K562 (cell line): ENCODE measurements at regions of chr22 and their contacts with region 1.

Region 1: GRCh38 chr22:17742527-17742902 is 31.8 kb downstream of the BID start:
- DNase-seq: peak; percentile 89 to 94 (median 92)
- ATAC-seq: peak; percentile 98
- H3K4me3 ChIP-seq: no peak overlapping the region
- H3K27ac ChIP-seq: no peak overlapping the region
- H3K4me1 ChIP-seq: peaks cover 0 to 18% of the 10 kb centered on the region in 2 experiments; a peak in 2 of 5 replicates
- H3K27me3 ChIP-seq: no peaks in the 10 kb centered on the region
- CTCF ChIP-seq: peak; percentile 89 to 95 (median 93)
- EP300 ChIP-seq: no peak
- POLR2A ChIP-seq: no peak
- RAD21 ChIP-seq: peak; percentile 74 to 93

Region 2: DNA sequence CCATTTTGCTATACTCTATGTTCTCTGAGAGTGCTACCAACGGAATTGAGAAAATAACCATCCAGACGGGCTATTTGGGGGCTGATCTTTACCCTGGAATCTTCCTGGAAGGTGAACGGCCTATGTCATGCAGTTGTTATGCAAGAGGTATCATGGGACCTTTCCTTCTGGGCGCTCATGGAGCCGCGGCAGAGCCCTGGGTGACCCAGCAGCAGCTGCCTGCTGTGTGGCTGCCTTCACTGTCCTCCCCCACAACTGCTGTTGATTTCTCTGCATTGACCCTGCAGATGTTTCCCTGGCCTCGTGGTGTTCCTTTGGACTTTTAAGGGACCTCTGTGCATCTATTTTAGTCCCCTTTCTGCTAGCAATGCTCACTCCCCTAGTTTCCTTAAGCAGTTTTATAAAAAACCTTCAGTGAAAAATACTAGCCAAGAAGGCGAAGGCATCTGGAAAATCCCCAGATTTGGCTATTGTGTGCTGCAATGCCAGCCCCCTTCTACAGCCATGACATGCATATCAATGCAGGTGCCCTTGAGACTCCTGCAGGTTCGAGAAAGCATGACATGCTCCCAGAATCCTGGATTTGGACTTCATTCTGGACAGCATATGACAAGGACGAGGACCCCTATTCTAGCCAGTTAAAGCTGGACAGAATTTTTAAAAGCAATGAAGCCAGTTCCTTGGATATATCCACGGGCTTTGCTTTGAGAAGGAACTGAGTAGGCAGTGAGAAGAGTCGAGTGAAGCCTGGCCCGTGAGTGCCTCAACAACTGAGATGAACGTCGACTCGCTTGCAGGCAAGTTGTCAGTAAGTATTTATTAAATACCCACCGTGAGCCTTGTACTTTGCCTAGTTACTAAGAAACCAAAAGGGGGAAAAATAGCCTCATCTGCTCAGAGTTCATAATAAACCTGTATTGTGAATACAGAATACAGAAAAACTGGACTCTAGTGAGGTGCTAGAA is 179.3 kb before region 1 on chr22 and contains the start of gene SLC25A18:
- CTCF ChIA-PET with region 1: no interaction called
- POLR2A ChIA-PET with region 1: no interaction called
- in situ Hi-C with region 1: loop called (anchors 10 kb)
- intact Hi-C with region 1: loop called (anchors 2 kb)
- DNase-seq: peak; percentile 37 to 47 (median 44)
- ATAC-seq: peak; percentile 56
- H3K4me3 ChIP-seq: no peak within 1 kb of the TSS
- H3K27ac ChIP-seq: no peak within 1 kb of the TSS
- H3K4me1 ChIP-seq: 0 out of 5 replicates have a peak, but pooled peaks cover 0 to 4% of the 10 kb centered on the region in 2 experiments
- H3K27me3 ChIP-seq: peaks cover 38 to 44% of the 10 kb centered on the region in 2 experiments
- CTCF ChIP-seq: peak; percentile 11 to 32 (median 25); a peak in 2 of 6 replicates
- EP300 ChIP-seq: no peak
- POLR2A ChIP-seq: no peak
- RAD21 ChIP-seq: no peak
- polyA plus RNA-seq, gene SLC25A18: 0.04 TPM in 1 of 2 experiments, not detected in the other

Region 3: DNA sequence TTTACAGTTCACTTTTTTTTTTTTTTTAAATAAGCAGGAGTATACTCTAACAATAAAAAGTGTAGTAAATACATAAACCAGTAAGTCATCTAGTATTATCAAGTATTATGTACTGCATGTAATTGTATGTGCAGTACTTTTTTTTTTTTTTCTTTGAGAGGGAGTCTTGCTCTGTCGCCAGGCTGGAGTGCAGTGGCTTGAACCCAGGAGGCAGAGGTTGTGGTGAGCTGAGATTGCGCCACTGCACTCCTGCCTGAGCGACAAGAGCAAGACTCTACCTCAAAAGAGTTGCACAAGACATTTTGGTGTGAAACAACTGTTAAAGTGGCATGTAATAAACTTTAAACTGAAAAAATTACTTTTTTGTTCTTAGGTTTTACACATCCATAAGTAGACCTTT is 87.2 kb before region 1 on chr22:
- CTCF ChIA-PET with region 1: no interaction called
- POLR2A ChIA-PET with region 1: no interaction called
- in situ Hi-C with region 1: no loop called
- intact Hi-C with region 1: no loop called
- DNase-seq: no peak
- ATAC-seq: no peak
- H3K4me3 ChIP-seq: no peak overlapping the region
- H3K27ac ChIP-seq: no peak overlapping the region
- H3K4me1 ChIP-seq: no peaks in the 10 kb centered on the region
- H3K27me3 ChIP-seq: no peaks in the 10 kb centered on the region
- CTCF ChIP-seq: no peak
- EP300 ChIP-seq: no peak
- POLR2A ChIP-seq: no peak
- RAD21 ChIP-seq: no peak

Region 4: GRCh38 chr22:17785185-17786184 is 43.0 kb after region 1 on chr22:
- CTCF ChIA-PET with region 1: interaction called, 23 read pairs
- POLR2A ChIA-PET with region 1: interaction called, 5 read pairs
- in situ Hi-C with region 1: no loop called
- intact Hi-C with region 1: loop called (anchors 1 kb)
- DNase-seq: peak; percentile 85 to 91 (median 87)
- ATAC-seq: peak; percentile 82
- H3K4me3 ChIP-seq: no peak overlapping the region
- H3K27ac ChIP-seq: peak overlapping the region; percentile 77; the same call in 1 of the 3 replicates
- H3K4me1 ChIP-seq: peaks cover 33 to 68% of the 10 kb centered on the region in 2 experiments; a peak in 4 of 5 replicates
- H3K27me3 ChIP-seq: no peaks in the 10 kb centered on the region; a peak in 1 of 5 replicates
- CTCF ChIP-seq: peak; percentile 88 to 97 (median 92)
- EP300 ChIP-seq: no peak
- POLR2A ChIP-seq: no peak
- RAD21 ChIP-seq: peak; percentile 44 to 84

Region 5: DNA sequence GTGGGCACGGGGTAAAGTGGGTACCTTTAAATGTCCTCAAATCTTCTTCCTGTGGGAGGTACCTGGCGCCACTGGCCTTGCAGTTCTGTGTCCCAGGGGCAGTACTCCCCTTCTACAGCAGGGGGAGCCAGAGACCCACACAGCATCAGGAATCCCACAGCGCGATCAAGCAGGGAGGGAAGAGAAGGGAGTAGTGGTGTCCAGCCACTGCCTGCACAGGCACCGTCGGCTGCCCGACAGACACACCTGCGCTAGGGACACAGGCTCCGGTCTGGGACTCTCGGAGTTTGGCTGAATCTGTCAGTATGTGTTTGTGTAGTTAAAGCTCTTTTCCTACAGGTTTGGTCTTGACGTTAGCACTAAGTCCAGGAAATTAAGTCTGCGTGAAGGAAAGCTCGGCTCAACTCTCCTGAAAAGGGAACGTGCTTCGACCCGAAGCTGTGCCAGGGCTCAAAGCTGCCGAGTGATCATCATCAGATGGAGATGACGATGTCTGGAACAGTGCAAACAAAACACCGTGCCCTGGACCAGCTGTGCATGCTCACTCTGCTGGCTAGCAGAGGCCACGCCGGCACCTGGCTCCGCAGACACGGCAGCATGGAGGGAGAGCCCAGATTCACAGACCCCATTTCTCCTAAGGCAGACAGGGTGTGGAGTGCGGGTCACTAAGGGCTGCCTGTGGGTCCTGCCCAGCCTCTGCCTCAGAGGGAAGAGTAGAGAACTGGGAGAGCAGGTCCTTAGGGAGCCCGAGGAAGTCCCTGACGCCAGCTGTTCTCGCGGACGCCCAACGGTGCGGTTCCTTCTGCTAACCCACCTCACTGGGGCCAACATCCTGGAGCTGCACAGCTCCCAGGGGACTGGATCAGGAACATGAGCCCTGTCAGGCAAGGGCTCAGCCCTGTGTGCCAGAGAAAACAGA is 87.8 kb after region 1 on chr22:
- CTCF ChIA-PET with region 1: no interaction called
- POLR2A ChIA-PET with region 1: interaction called, 3 read pairs
- in situ Hi-C with region 1: no loop called
- intact Hi-C with region 1: loop called (anchors 10 kb)
- DNase-seq: peak; percentile 89 to 91 (median 90)
- ATAC-seq: peak; percentile 97
- H3K4me3 ChIP-seq: no peak overlapping the region
- H3K27ac ChIP-seq: no peak overlapping the region
- H3K4me1 ChIP-seq: peaks cover 0 to 8% of the 10 kb centered on the region in 2 experiments; a peak in 1 of 5 replicates
- H3K27me3 ChIP-seq: no peaks in the 10 kb centered on the region
- CTCF ChIP-seq: peak; percentile 97 to 99 (median 98)
- EP300 ChIP-seq: no peak
- POLR2A ChIP-seq: no peak
- RAD21 ChIP-seq: peak; percentile 95 to 99

Region 6: DNA sequence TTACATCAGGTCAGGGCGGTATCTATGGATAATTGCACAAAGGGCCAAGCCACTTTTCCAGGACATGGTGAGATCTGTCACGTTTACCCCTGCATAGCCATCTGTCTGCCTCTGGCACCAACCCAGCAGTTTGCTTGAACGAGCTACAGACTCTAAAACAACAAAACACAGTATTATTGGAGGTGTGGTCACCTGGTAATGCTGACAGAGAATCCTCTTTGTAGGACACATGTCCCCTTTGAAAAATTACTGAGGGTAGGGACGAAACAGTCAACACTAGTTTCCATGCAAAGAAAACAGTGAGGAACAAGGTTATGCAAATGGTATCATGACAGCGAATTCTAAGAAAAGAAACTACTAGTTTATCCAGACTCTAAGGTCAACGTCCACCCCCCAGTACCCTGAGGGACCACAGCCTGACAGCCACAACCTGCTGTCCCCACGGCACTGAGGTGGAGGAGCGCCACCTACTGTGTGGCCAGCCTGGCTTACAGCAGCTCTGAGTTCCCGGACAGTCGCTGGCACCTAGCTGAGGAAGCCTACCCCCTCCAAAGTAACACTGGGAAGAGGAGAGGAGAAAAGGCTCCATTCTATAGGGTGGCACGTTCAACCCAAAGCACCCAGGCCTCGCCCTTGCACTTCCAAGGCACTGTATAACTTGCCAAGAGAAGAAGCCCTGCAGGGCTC is 149.1 kb after region 1 on chr22:
- CTCF ChIA-PET with region 1: no interaction called
- POLR2A ChIA-PET with region 1: no interaction called
- in situ Hi-C with region 1: no loop called
- intact Hi-C with region 1: loop called (anchors 5 kb)
- DNase-seq: peak; percentile 51 to 59 (median 55)
- ATAC-seq: peak; percentile 84
- H3K4me3 ChIP-seq: no peak overlapping the region
- H3K27ac ChIP-seq: no peak overlapping the region
- H3K4me1 ChIP-seq: no peaks in the 10 kb centered on the region
- H3K27me3 ChIP-seq: no peaks in the 10 kb centered on the region
- CTCF ChIP-seq: peak; percentile 67 to 78 (median 68)
- EP300 ChIP-seq: no peak
- POLR2A ChIP-seq: no peak
- RAD21 ChIP-seq: peak; percentile 26 to 73; a peak in 3 of 4 replicates

Region 7: GRCh38 chr22:17931400-17931825 is 188.9 kb after region 1 on chr22:
- CTCF ChIA-PET with region 1: no interaction called
- POLR2A ChIA-PET with region 1: no interaction called
- in situ Hi-C with region 1: no loop called
- intact Hi-C with region 1: no loop called
- DNase-seq: no peak
- ATAC-seq: no peak
- H3K4me3 ChIP-seq: no peak overlapping the region
- H3K27ac ChIP-seq: no peak overlapping the region
- H3K4me1 ChIP-seq: peaks cover 0 to 9% of the 10 kb centered on the region in 2 experiments; a peak in 2 of 5 replicates
- H3K27me3 ChIP-seq: no peaks in the 10 kb centered on the region
- CTCF ChIP-seq: no peak
- EP300 ChIP-seq: no peak
- POLR2A ChIP-seq: no peak
- RAD21 ChIP-seq: no peak

Region 8: DNA sequence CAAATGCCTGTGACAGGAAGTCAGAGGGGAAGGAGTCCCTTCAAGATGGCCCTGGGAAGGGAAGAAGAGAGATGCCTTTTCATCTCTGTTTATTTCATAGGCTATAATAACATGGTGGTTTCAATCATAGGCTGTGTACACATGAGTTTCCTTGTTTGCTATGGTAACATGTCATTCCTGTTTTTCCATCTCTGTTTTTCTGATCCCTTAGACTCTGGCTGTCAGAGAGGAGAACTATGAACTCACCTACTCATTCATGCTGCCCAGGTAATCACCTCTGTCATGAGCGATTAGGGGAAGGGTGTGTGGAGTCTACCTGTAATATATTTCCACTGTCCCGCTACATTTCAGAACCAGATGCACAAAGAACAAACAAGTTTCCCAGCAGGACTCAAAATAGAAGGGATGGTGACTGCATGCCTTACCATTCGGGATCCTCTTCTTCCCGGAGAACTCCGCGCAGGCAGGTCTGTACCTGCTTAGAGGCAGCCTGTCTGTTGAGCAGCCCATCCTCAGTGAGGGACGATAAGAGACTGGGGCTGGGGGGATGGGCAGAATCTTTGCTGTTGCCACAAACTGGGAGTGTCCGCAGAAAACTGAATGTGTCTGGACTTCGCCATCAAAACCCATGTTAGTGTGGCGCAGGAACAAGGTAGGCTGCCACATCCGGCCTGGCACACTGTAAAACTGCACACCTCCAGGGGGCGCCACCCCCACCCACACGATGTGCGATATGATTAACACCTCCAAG is 328.2 kb after region 1 on chr22:
- CTCF ChIA-PET with region 1: interaction called, 8 read pairs
- POLR2A ChIA-PET with region 1: no interaction called
- in situ Hi-C with region 1: loop called (anchors 5 kb)
- intact Hi-C with region 1: no loop called
- DNase-seq: peak in 1 of 4 experiments; percentile 40
- ATAC-seq: peak; percentile 11; the same call in 2 of the 3 replicates
- H3K4me3 ChIP-seq: no peak overlapping the region
- H3K27ac ChIP-seq: no peak overlapping the region
- H3K4me1 ChIP-seq: peaks cover 4 to 5% of the 10 kb centered on the region in 2 experiments; a peak in 2 of 5 replicates
- H3K27me3 ChIP-seq: peaks cover 33 to 41% of the 10 kb centered on the region in 2 experiments
- CTCF ChIP-seq: peak; percentile 38 to 72 (median 46)
- EP300 ChIP-seq: no peak
- POLR2A ChIP-seq: no peak
- RAD21 ChIP-seq: no peak